Activated B cell treated with CpG ODN at 0.5 μM for 24 hours (primary cell): ENCODE measurements at regions of chr2 and their contacts with region 1.

Region 1: DNA sequence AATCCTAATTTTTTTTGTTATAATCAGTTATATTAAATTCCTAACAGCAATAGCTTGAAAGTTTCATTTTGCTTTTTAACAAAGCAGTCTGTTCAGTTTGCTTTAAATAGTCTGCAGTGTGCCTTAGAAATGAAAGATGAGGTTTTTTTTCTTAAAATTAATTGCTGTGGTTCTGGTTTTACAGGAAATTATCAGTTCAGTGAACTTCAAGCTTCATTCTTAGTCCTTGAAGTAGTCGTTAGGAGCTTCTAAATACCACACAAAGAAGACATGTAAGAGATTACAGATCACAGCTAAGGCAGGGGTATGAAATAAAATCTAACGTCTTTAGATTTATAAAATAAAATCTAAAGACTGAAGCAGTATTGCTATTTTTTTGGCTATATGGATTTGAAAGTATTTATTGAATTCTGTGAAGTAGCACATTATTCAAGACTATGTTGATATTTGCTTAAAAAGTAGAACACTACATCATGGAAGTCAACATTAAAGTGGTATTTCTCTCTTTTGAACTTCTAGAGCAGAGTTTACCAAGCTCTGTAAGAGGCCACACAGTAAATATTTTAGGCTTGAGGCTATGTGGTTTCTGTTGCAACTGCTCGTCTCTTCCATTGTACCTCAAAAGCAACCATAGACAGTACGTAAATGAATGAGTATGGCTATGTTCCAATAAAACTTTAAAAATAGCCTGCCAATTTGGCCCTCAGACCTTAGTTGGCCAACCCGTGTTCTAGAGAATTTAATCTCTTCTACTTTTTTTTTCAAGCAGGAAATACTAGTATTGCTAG is 81.5 kb upstream of the STON1 start:
- DNase-seq: no peak
- ATAC-seq: peak; percentile 40
- H3K4me3 Mint-ChIP-seq: peak overlapping the region; percentile 45
- H3K27ac Mint-ChIP-seq: peak overlapping the region; percentile 70
- H3K4me1 Mint-ChIP-seq: peaks cover 35% of the 10 kb centered on the region
- H3K27me3 Mint-ChIP-seq: no peaks in the 10 kb centered on the region
- CTCF ChIP-seq: no peak

Region 2: GRCh38 chr2:48461721-48462120 is 13.3 kb after region 1 on chr2:
- CTCF ChIA-PET with region 1: interaction called, 3 read pairs
- POLR2A ChIA-PET with region 1: interaction called, 3 read pairs
- intact Hi-C with region 1: loop called (anchors 2 kb)
- DNase-seq: no peak
- ATAC-seq: no peak
- H3K4me3 Mint-ChIP-seq: no peak overlapping the region
- H3K27ac Mint-ChIP-seq: peak overlapping the region; percentile 39
- H3K4me1 Mint-ChIP-seq: no peaks in the 10 kb centered on the region
- H3K27me3 Mint-ChIP-seq: no peaks in the 10 kb centered on the region
- CTCF ChIP-seq: no peak